Lower leg skin (tissue), 4 donors: ENCODE measurements at regions of chr6 and their contacts with region 1.

Region 1: DNA sequence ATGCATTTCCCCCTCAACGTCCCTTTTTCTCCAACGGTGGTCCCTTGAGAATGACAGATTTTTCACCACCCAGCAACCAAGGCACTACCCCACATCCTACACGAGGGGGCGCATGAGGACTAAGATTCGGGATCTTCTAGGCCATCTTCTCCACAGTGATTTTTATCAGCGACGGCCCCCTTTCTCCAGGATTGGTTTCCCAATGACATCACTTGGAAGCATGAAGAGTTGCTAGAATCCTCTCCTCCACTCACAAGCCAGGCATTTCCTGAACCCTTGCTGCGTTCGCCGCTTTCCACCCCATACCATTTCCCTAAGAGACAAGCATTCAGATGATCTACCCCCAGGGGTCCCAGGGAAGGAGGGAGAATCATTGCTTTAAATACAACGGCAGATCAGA is 252.0 kb downstream of the HIVEP2 start:
- DNase-seq: peak; percentile 45 to 91
- H3K4me3 ChIP-seq: no peak overlapping the region
- CTCF ChIP-seq: peak in 1 of 3 donors; percentile 78
- POLR2A ChIP-seq: no peak

Region 2: GRCh38 chr6:142871910-142872331 is 179.0 kb after region 1 on chr6:
- intact Hi-C with region 1: no loop called
- DNase-seq: peak in 1 of 2 donors; percentile 60
- H3K4me3 ChIP-seq: no peak overlapping the region
- CTCF ChIP-seq: no peak
- POLR2A ChIP-seq: no peak

Region 3: GRCh38 chr6:143026696-143027449 is 333.9 kb after region 1 on chr6:
- intact Hi-C with region 1: loop called (anchors 10 kb)
- DNase-seq: no peak
- H3K4me3 ChIP-seq: no peak overlapping the region
- CTCF ChIP-seq: no peak
- POLR2A ChIP-seq: no peak

Region 4: DNA sequence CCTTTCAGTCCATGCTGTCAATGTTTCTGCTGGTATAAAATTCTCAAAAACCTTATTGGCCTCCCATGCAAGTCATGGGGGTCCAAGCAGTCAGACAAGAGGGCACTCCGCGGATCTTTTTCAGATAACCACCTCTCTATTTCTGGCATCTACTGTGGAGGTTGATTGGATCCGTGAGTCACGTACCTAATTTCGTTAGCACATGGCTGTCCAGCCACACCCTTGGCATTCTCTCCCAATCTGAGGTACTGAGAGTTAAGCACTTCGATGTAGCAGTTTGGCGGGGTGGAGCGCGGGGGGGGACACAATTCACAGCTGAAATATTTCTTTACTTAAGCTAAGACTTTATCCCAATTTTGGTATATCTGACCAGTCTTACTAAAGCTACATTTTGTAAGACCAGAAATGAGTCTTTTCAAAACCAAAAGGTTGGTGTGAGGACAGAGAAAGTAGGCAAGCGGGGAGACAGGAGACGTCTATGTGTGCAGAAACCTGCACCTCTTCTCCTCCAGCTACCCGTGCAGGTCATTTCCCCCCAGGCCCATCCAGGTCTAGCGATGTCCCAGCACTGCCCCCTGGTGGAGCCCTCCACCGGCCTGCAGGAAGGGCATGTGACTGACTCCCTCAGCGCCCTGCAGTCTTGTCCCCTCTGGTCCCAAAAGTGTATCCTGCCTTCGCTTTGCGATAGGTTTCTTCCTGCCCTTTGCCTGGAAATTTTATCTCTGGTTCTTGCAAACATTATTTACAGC is 644.4 kb after region 1 on chr6:
- intact Hi-C with region 1: loop called (anchors 10 kb)
- DNase-seq: peak; percentile 46 to 88
- H3K4me3 ChIP-seq: no peak overlapping the region
- CTCF ChIP-seq: no peak
- POLR2A ChIP-seq: no peak

Region 5: GRCh38 chr6:143427109-143427817 is 734.3 kb after region 1 on chr6:
- intact Hi-C with region 1: loop called (anchors 5 kb)
- DNase-seq: peak; percentile 55 to 94
- H3K4me3 ChIP-seq: no peak overlapping the region
- CTCF ChIP-seq: peak in 1 of 3 donors; percentile 73
- POLR2A ChIP-seq: no peak